GM12878 (cell line): ENCODE measurements at regions of chr9 and their contacts with region 1.

Region 1: GRCh38 chr9:84296146-84296843 is 44.3 kb downstream of the SLC28A3 start:
- DNase-seq: peak; percentile 66
- ATAC-seq: peak; percentile 80
- H3K4me3 ChIP-seq: no peak overlapping the region
- H3K27ac ChIP-seq: peak overlapping the region; percentile 86
- H3K4me1 ChIP-seq: peaks cover 46% of the 10 kb centered on the region
- H3K27me3 ChIP-seq: no peaks in the 10 kb centered on the region
- CTCF ChIP-seq: no peak
- EP300 ChIP-seq: peak; percentile 63 to 70; a peak in 3 of 4 replicates
- POLR2A ChIP-seq: 0 out of 2 replicates have a peak, but pooled peaks have one; percentile 18
- RAD21 ChIP-seq: no peak

Region 2: DNA sequence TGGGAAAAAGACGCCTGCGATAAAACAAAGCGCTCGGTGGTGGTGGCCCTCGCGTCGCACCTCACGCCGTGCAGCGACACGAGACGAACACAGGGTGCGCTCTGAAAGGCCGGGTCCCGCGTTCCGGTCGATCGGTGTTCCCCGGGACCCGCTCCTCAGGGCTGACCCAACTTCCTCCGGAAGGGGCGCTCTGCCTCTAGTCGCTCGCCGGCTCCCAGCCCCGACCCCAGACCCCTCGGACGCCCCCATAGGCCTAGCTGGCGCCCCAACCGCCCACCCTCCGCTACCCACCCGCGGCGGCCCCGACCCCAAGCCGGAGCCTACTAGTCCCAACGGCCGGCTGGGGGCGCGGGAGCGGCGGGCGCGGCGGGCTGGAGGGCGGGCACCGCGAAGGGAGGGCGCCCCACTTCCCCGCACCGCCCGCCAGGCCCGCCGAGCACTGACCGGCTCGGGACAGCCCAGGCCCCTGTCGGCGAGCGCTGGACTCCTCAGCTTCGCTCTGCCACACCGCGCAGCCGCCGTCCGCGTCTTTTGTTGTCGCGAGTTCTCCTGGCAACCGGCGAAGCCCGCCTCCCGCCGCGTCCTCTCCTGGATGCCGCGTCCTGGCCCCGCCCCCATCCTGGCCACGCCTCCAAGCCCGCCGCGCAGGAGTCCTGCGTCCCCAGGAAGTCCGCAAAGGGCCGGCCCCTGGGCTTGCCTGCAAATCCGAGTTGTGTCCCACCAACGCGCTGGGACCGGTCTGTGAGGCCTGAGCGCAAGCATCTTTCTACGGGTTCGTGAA is 375.2 kb before region 1 on chr9 and contains the start of gene KIF27:
- CTCF ChIA-PET with region 1: interaction called, 15 read pairs
- POLR2A ChIA-PET with region 1: interaction called, 5 read pairs
- RAD21 ChIA-PET with region 1: no interaction called
- SMC1A ChIA-PET with region 1: interaction called, 3 read pairs
- in situ Hi-C with region 1: no loop called
- intact Hi-C with region 1: no loop called
- DNase-seq: peak; percentile 80
- ATAC-seq: peak; percentile 95
- H3K4me3 ChIP-seq: peak within 1 kb of the TSS; percentile 79
- H3K27ac ChIP-seq: peak within 1 kb of the TSS; percentile 79
- H3K4me1 ChIP-seq: peaks cover 9% of the 10 kb centered on the region
- H3K27me3 ChIP-seq: no peaks in the 10 kb centered on the region
- CTCF ChIP-seq: peak in 2 of 3 experiments; percentile 11 to 19; a peak in 3 of 6 replicates
- EP300 ChIP-seq: no peak
- POLR2A ChIP-seq: peak; percentile 81
- RAD21 ChIP-seq: no peak
- polyA plus RNA-seq, gene KIF27: 0.64 to 0.92 TPM

Region 3: GRCh38 chr9:84146893-84147710 is 149.2 kb before region 1 on chr9:
- CTCF ChIA-PET with region 1: no interaction called
- POLR2A ChIA-PET with region 1: no interaction called
- RAD21 ChIA-PET with region 1: no interaction called
- SMC1A ChIA-PET with region 1: no interaction called
- in situ Hi-C with region 1: no loop called
- intact Hi-C with region 1: no loop called
- DNase-seq: no peak
- ATAC-seq: no peak
- H3K4me3 ChIP-seq: no peak overlapping the region
- H3K27ac ChIP-seq: no peak overlapping the region
- H3K4me1 ChIP-seq: no peaks in the 10 kb centered on the region
- H3K27me3 ChIP-seq: no peaks in the 10 kb centered on the region; a peak in 1 of 4 replicates
- CTCF ChIP-seq: no peak
- EP300 ChIP-seq: no peak
- POLR2A ChIP-seq: no peak
- RAD21 ChIP-seq: no peak

Region 4: GRCh38 chr9:84271531-84271900 is 24.8 kb before region 1 on chr9:
- CTCF ChIA-PET with region 1: interaction called, 26 read pairs
- POLR2A ChIA-PET with region 1: interaction called, 4 read pairs
- RAD21 ChIA-PET with region 1: interaction called, 8 read pairs
- SMC1A ChIA-PET with region 1: interaction called, 42 read pairs
- in situ Hi-C with region 1: no loop called
- intact Hi-C with region 1: no loop called
- DNase-seq: no peak
- ATAC-seq: peak; percentile 82
- H3K4me3 ChIP-seq: peak overlapping the region; percentile 48
- H3K27ac ChIP-seq: no peak overlapping the region
- H3K4me1 ChIP-seq: peaks cover 4% of the 10 kb centered on the region; the same call in 1 of the 2 replicates
- H3K27me3 ChIP-seq: no peaks in the 10 kb centered on the region
- CTCF ChIP-seq: no peak
- EP300 ChIP-seq: no peak
- POLR2A ChIP-seq: no peak
- RAD21 ChIP-seq: no peak

Region 5: GRCh38 chr9:84285381-84285780 is 10.9 kb before region 1 on chr9:
- CTCF ChIA-PET with region 1: interaction called, 38 read pairs
- POLR2A ChIA-PET with region 1: interaction called, 7 read pairs
- RAD21 ChIA-PET with region 1: interaction called, 9 read pairs
- SMC1A ChIA-PET with region 1: interaction called, 48 read pairs
- in situ Hi-C with region 1: no loop called
- intact Hi-C with region 1: no loop called
- DNase-seq: no peak
- ATAC-seq: peak; percentile 58; the same call in 2 of the 3 replicates
- H3K4me3 ChIP-seq: peak overlapping the region; percentile 47; the same call in 1 of the 2 replicates
- H3K27ac ChIP-seq: no peak overlapping the region
- H3K4me1 ChIP-seq: peaks cover 5% of the 10 kb centered on the region; the same call in 1 of the 2 replicates
- H3K27me3 ChIP-seq: no peaks in the 10 kb centered on the region
- CTCF ChIP-seq: no peak
- EP300 ChIP-seq: no peak
- POLR2A ChIP-seq: no peak
- RAD21 ChIP-seq: no peak